ENCODE measurements at regions of chr2 and their contacts with region 1.

Region 1: DNA sequence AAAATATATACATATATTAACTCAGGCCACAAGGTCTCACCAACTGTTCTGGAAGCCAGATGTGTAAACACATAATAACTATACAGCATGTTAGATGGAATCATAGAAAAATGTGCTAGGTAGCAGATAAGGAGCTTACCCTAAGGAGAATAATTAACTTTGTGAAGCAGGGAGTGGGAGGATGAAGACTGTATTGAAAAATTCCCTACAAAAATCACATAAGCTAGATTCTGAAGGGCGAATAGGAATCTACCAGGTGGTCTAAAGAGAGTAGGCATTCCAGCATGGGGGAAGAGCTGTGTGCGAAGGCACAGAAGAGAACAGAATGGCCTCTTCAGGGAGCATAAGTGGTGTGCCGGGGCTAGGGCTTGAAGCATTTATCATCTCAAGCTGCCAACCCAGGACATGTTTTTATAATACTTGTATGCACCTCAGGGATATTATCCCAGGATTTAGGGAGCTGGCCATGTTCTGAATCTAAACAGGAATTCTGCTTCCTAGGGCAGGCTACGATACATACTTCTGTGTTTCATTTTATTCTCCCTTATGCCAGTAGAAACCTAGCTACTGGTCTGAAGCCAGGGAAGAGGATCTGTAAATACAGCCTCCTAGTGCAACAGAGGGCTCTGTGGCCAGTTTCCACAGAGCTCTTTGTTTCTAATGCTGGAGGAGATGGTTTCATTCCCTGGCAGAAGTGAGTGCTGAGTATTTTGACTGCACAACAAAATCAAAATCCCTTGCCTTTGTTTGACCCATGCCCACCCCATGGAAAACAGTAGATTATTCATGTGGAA is 56.7 kb downstream of the NEMP2 start:
- DNase-seq: peak in 1 of 2 donors; percentile 32
- H3K4me3 ChIP-seq: peak overlapping the region in 2 of 3 donors; percentile 16 to 24
- H3K27ac ChIP-seq: peak overlapping the region; percentile 86 to 89
- H3K4me1 ChIP-seq: peaks cover 0 to 9% of the 10 kb centered on the region in 2 donors
- H3K27me3 ChIP-seq: no peaks in the 10 kb centered on the region
- CTCF ChIP-seq: no peak
- POLR2A ChIP-seq: no peak

Region 2: GRCh38 chr2:190505696-190506095 is 27.8 kb after region 1 on chr2:
- intact Hi-C with region 1: loop called (anchors 2 kb)
- DNase-seq: no peak
- H3K4me3 ChIP-seq: no peak overlapping the region
- H3K27ac ChIP-seq: peak overlapping the region in 1 of 2 donors; percentile 22
- H3K4me1 ChIP-seq: peaks cover 0 to 6% of the 10 kb centered on the region in 2 donors
- H3K27me3 ChIP-seq: no peaks in the 10 kb centered on the region
- CTCF ChIP-seq: no peak
- POLR2A ChIP-seq: no peak